Upper lobe of right lung (tissue), 1 donor: ENCODE measurements at regions of chr12 and their contacts with region 1.

Region 1: GRCh38 chr12:6873094-6874014 is at the start of gene SPSB2:
- DNase-seq: peak; percentile 100
- ATAC-seq: peak; percentile 94
- H3K4me3 ChIP-seq: peak within 1 kb of the TSS; percentile 96
- H3K27ac ChIP-seq: peak within 1 kb of the TSS; percentile 89
- H3K4me1 ChIP-seq: peaks cover 34% of the 10 kb centered on the region
- H3K27me3 ChIP-seq: no peaks in the 10 kb centered on the region
- CTCF ChIP-seq: no peak
- total RNA-seq, gene SPSB2: 30.2 TPM

Region 2: GRCh38 chr12:6937481-6938297 is 64.3 kb after region 1 on chr12:
- intact Hi-C with region 1: loop called (anchors 10 kb)
- DNase-seq: peak; percentile 97
- ATAC-seq: peak; percentile 94
- H3K4me3 ChIP-seq: peak overlapping the region; percentile 64
- H3K27ac ChIP-seq: peak overlapping the region; percentile 95
- H3K4me1 ChIP-seq: peaks cover 44% of the 10 kb centered on the region
- H3K27me3 ChIP-seq: no peaks in the 10 kb centered on the region
- CTCF ChIP-seq: peak; percentile 88